AG04450 (cell line): ENCODE measurements at regions of chr16 and their contacts with region 1.

Region 1: DNA sequence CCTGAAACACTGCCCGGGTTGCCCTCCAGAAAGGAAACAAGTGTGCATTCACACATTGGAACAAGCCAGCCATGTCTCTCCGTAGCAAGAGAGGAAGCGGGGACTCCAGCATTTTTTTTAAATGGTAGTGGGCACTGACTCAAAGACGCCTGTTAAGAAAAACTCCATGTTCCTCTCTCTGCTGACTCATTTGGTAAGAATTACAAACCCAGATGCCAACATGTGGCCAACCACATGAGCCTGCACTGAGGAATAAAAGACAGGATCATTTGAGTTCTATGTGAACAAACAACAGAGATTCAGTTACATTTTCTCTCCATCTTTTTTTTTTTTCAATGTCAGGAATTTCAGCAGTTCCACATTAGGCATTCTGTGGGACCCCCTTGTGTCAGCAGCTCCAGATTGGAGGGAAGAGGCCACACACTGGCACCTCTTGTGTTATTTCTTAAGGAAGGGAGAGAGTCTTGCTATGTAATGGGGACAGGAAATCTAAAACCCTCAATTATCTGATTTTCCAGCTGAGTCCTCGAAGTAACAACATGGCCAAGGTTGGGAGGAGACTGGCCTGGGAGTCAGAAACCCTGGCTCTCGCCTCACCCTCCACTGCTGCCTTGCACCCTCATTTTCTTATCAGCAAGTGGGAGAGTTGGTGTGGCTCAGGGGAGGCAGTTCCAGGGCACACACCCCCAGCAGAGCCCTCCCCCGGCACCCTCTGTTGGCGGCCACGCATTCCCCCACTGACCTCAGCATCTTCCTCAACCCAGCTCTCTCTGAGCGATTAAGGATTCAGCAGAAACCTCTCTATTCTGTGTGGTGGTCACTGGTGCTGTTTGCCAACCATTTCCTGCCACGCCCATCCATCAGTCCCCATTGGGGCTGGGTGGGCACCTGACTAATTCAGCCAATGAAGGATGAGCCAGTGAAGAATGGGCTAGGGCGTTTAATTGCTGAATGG is 173.0 kb downstream of the FOXL1 start:
- DNase-seq: peak; percentile 63
- H3K4me3 ChIP-seq: no peak overlapping the region
- H3K27ac ChIP-seq: peak overlapping the region; percentile 70
- H3K27me3 ChIP-seq: no peaks in the 10 kb centered on the region
- CTCF ChIP-seq: no peak

Region 2: DNA sequence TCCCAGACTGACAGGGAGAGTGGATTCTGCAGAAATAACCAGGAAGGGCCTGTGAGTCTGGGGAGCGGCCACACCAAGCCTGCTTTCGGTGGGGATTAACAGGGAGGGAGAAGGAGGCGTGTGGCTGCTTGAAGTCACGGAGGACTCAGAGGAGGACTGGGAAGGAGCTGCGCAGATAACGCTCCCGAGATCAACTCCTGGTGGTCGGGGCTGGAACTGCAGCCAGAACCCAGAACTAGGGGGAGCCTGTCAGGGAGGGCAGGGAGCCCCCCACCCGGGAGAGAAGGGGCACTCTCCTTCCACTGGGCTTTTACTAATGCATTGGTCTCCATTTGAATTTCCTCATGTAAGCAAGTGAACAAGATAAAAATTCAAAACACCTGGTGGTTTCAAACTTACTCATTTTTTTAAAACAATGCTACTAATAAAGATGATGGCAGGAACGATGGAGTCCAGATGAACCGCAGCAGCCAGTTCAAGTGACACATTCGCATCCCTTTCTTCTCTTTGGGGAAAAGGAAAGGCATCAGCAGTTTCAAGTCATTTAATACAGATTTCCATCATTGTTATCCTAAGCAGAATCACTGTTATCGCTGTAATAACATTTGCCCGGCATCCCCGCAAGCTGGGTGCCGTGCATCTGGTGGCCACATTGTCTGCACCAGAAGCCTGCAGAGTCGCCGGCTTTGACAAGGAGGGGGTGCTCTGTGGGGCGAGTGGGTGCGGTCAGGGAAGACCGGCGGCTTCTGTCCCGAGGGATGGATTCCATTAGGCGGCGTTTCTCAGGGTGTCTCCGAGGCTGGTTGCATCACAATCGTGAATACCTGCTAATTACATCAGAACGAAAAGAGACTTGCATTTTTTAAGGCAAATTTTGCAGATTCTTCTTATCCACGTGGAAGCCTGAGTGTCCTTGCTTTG is 10.0 kb after region 1 on chr16:
- CTCF ChIA-PET with region 1: interaction called, 14 read pairs
- POLR2A ChIA-PET with region 1: no interaction called
- DNase-seq: no peak
- H3K4me3 ChIP-seq: peak overlapping the region; percentile 13; the same call in 1 of the 2 replicates
- H3K27ac ChIP-seq: no peak overlapping the region
- H3K27me3 ChIP-seq: peaks cover 2% of the 10 kb centered on the region
- CTCF ChIP-seq: peak; percentile 89